A549 (cell line): ENCODE measurements at regions of chr16 and their contacts with region 1.

Region 1: DNA sequence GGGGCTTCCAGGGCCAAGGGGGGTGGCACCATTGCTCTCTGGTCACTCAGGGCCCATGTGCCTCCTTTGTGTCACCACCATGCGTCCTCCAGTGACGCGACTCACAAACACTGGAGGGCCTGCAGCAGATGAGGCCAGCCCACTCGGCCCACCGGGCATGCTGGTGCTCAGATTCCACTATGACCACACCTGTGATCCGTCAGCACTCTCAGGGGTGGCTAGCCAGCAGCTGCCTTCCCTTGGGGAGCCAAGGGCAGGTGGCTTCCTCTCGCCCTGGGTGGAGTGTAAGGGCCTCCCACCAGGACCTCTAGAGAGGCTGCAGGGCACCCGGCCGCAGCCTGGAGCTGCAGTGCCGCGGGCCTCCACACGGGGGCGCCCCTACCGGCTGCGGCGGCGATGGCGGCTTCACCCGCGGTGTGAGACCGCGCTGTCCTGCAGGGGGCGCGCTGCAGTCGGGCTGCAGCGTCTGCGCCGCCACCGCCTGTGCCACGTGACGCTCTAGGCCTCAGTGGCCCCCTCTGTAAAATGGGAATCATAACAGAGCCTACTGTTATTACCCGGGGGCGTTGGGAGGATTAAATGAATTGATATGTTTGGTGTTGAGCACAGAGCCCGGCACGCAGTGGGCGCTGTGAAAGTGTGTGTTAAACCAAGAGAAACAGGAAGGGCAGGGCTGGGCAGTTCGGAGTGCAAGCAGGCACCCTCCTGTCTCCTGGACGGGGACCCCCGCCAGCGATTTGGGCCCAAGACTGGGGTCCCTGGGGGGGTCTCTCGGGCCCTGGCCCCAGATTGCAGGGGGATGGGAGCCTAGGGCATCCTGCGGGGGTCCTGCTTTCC is 192.4 kb upstream of the GSE1 start:
- DNase-seq: peak; percentile 74 to 78
- ATAC-seq: peak; percentile 49 to 72; a peak in 5 of 6 replicates
- H3K4me3 ChIP-seq: no peak overlapping the region
- H3K27ac ChIP-seq: peak overlapping the region in 1 of 2 experiments; percentile 86; a peak in 3 of 6 replicates
- H3K4me1 ChIP-seq: peaks cover 27% of the 10 kb centered on the region
- CTCF ChIP-seq: peak; percentile 100
- EP300 ChIP-seq: no peak
- POLR2A ChIP-seq: no peak
- RAD21 ChIP-seq: peak; percentile 64 to 86

Region 2: GRCh38 chr16:85360323-85361277 is 60.1 kb before region 1 on chr16:
- CTCF ChIA-PET with region 1: interaction called, 11 read pairs
- POLR2A ChIA-PET with region 1: no interaction called
- DNase-seq: no peak
- ATAC-seq: no peak
- H3K4me3 ChIP-seq: no peak overlapping the region
- H3K27ac ChIP-seq: peak overlapping the region in 1 of 2 experiments; percentile 27; a peak in 1 of 6 replicates
- H3K4me1 ChIP-seq: 0 out of 3 replicates have a peak, but pooled peaks cover 5% of the 10 kb centered on the region
- CTCF ChIP-seq: no peak
- EP300 ChIP-seq: no peak
- POLR2A ChIP-seq: no peak
- RAD21 ChIP-seq: no peak

Region 3: GRCh38 chr16:85393674-85394483 is 26.8 kb before region 1 on chr16:
- CTCF ChIA-PET with region 1: interaction called, 113 read pairs
- POLR2A ChIA-PET with region 1: interaction called, 3 read pairs
- DNase-seq: peak; percentile 65 to 84
- ATAC-seq: peak; percentile 40 to 69; a peak in 3 of 6 replicates
- H3K4me3 ChIP-seq: no peak overlapping the region
- H3K27ac ChIP-seq: peak overlapping the region in 1 of 2 experiments; percentile 86; a peak in 4 of 6 replicates
- H3K4me1 ChIP-seq: peaks cover 67% of the 10 kb centered on the region
- CTCF ChIP-seq: peak; percentile 84
- EP300 ChIP-seq: no peak
- POLR2A ChIP-seq: no peak
- RAD21 ChIP-seq: peak; percentile 58 to 69

Region 4: DNA sequence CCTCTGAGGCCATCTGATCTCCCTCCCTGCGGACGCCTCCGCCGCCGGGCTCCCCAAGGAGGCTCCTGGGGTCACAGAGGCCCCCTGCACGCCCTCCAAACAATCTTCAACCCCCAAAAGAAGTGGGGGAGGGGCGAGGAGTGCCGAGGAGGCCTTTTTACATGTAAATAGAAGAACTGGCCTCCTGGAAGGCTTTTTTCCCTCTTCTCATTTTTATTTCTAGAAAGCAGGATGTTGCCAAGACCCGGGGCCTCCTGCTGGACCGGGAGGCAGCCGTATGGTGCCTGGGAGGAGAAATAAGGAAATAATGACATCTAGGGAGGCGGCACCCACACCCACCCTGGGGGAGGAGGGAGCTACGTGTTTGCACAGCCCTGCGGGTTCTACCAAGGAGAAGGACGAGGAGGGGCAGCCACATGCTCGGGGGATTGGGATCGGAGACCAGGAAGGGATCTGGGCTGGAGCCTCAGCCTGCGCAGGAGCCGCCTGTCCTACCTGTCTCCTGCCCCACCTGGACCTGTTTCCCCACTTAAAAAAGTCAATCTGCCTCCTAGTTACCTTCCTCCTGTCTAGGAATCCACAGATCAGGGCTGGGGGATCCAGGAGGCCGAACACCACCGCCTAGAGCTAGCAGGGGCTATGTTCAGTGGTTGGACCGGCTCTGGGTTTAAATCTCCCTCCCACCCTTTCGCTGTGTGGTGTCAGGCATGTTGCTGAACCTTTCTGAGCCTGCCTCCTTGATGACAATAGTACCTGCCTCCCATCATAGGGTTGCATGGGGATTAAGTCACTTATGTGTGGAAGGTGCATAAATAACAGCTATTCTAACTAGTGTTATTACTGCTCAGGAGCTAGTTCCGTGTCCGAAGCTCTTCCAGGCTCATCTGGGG is 16.7 kb after region 1 on chr16:
- CTCF ChIA-PET with region 1: interaction called, 59 read pairs
- POLR2A ChIA-PET with region 1: no interaction called
- DNase-seq: no peak
- ATAC-seq: no peak
- H3K4me3 ChIP-seq: no peak overlapping the region
- H3K27ac ChIP-seq: no peak overlapping the region
- H3K4me1 ChIP-seq: 0 out of 3 replicates have a peak, but pooled peaks cover 3% of the 10 kb centered on the region
- CTCF ChIP-seq: no peak
- EP300 ChIP-seq: no peak
- POLR2A ChIP-seq: no peak
- RAD21 ChIP-seq: no peak

Region 5: DNA sequence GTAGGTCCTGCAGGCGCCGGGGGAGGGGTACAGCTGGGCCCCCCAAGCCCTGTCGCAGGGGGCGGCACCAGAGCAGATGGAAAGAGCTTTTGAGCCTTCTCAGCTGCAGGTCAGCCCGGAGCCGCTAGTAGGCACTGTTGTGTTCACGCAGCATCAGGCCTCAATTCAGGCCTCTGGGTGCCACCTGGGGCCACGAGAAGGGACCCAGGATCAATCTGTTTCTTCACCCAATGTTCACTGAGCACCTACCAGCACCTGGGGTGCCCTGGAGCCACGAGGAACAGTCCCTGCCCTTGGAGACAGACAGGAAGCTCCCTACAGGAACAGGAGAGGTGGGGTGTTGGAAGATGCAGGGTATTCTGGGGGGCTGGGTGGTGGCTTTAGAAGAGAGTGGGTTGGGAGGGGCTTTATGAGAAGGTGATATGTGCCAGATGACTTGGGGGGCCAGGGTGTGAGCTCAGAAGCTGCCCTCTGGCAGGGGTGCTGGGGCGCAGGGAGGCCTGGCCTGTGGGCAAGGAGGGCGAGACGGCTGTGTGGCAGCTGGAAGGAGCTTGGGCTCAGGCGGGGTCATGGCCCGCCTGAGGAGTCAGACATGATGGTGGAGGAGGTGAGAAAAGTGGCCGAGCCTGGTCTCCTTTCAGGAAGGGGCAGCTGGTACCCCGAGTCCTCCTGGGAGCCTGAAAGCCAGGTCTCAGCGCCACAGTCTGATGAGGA is 70.5 kb after region 1 on chr16:
- CTCF ChIA-PET with region 1: interaction called, 41 read pairs
- POLR2A ChIA-PET with region 1: no interaction called
- DNase-seq: peak; percentile 52 to 63
- ATAC-seq: peak; percentile 37 to 82; a peak in 3 of 6 replicates
- H3K4me3 ChIP-seq: no peak overlapping the region
- H3K27ac ChIP-seq: peak overlapping the region; percentile 32 to 71; a peak in 5 of 6 replicates
- H3K4me1 ChIP-seq: peaks cover 15% of the 10 kb centered on the region
- CTCF ChIP-seq: peak; percentile 84
- EP300 ChIP-seq: no peak
- POLR2A ChIP-seq: no peak
- RAD21 ChIP-seq: peak; percentile 59 to 69

Region 6: DNA sequence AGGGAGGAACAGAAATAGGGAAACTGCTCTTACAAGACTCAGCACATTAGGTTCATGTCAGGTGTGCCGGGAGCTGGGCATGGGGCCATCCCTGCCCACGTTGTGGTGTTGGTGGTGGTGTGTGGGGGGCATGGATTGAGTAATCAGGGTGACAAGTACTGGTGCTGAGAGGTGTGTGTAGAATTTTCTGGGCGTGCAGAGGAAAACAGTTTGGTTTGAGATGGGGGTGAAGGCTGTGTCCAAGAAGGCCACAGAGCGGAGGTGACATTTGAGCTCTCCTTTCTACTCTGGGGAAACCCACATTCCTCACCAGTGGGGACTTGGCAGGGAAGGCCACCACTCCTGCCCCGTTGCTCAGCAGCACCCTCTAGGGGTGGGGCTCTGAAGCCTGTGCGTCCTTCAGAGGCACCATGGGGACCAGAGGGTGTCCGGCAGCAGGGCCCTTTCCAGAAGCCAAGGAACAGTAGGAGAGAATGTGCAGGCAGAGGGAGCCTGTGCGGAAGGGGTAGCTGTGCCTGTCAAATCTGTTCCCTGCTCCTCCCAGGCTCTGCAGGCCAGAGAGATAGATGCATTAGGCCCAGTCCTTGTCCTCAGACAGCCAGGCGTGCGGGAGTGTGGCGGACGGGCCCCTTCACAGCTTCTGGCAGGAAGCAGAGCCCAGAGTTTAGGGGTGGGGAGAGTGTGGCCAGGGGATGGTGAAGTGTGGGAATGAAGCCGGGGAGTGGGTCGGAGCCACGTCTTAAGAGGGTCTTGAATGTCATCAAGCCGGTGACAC is 143.7 kb after region 1 on chr16:
- CTCF ChIA-PET with region 1: interaction called, 32 read pairs
- POLR2A ChIA-PET with region 1: no interaction called
- DNase-seq: peak in 1 of 2 experiments; percentile 38
- ATAC-seq: peak; percentile 41 to 55; a peak in 5 of 6 replicates
- H3K4me3 ChIP-seq: no peak overlapping the region
- H3K27ac ChIP-seq: peak overlapping the region in 1 of 2 experiments; percentile 25; a peak in 1 of 6 replicates
- H3K4me1 ChIP-seq: peaks cover 17% of the 10 kb centered on the region
- CTCF ChIP-seq: peak; percentile 58
- EP300 ChIP-seq: no peak
- POLR2A ChIP-seq: no peak
- RAD21 ChIP-seq: 0 out of 5 replicates have a peak, but pooled peaks of 1 of the 2 experiments have one; percentile 22

Region 7: GRCh38 chr16:85601730-85602401 is 181.1 kb after region 1 on chr16:
- CTCF ChIA-PET with region 1: interaction called, 12 read pairs
- POLR2A ChIA-PET with region 1: no interaction called
- DNase-seq: no peak
- ATAC-seq: no peak; a peak in 1 of 6 replicates
- H3K4me3 ChIP-seq: no peak overlapping the region
- H3K27ac ChIP-seq: peak overlapping the region in 1 of 2 experiments; percentile 45; a peak in 2 of 6 replicates
- H3K4me1 ChIP-seq: 0 out of 3 replicates have a peak, but pooled peaks cover 5% of the 10 kb centered on the region
- CTCF ChIP-seq: no peak
- EP300 ChIP-seq: no peak
- POLR2A ChIP-seq: no peak
- RAD21 ChIP-seq: no peak